ENCODE measurements at regions of chr19 and their contacts with region 1.

Region 1: GRCh38 chr19:49145573-49146407 is 9.4 kb downstream of the HRC start:
- DNase-seq: peak; percentile 82
- H3K4me3 Mint-ChIP-seq: peak overlapping the region; percentile 52
- H3K27ac Mint-ChIP-seq: no peak overlapping the region
- H3K4me1 Mint-ChIP-seq: peaks cover 41% of the 10 kb centered on the region
- H3K27me3 Mint-ChIP-seq: peaks cover 77% of the 10 kb centered on the region

Region 2: DNA sequence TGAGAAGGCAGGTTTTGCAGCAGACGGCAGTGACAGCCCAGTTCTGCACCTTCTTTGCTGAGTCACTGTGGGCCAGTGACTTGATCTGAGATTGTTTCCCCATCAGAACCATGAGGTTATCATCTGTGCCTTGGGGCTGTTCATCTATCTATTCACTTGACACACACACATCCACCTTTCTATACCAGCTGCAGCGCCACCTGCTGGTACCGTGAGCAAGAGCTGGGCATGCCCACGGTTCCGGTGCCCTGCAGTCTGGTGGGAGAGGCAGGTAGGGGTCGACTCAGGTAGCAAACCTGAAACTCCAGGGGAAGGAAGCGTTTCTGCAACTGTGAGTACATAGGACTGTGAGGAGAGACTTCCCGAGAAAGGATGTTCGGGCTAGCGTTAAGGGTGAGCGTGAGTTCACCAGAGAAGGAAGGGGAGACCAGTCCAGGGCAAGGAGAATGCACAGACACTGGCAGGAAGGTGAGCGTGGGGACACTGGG is 39.1 kb before region 1 on chr19:
- CTCF ChIA-PET with region 1: interaction called, 14 read pairs
- DNase-seq: peak; percentile 77
- H3K4me3 Mint-ChIP-seq: peak overlapping the region; percentile 18
- H3K27ac Mint-ChIP-seq: peak overlapping the region; percentile 74
- H3K4me1 Mint-ChIP-seq: peaks cover 6% of the 10 kb centered on the region
- H3K27me3 Mint-ChIP-seq: no peaks in the 10 kb centered on the region

Region 3: DNA sequence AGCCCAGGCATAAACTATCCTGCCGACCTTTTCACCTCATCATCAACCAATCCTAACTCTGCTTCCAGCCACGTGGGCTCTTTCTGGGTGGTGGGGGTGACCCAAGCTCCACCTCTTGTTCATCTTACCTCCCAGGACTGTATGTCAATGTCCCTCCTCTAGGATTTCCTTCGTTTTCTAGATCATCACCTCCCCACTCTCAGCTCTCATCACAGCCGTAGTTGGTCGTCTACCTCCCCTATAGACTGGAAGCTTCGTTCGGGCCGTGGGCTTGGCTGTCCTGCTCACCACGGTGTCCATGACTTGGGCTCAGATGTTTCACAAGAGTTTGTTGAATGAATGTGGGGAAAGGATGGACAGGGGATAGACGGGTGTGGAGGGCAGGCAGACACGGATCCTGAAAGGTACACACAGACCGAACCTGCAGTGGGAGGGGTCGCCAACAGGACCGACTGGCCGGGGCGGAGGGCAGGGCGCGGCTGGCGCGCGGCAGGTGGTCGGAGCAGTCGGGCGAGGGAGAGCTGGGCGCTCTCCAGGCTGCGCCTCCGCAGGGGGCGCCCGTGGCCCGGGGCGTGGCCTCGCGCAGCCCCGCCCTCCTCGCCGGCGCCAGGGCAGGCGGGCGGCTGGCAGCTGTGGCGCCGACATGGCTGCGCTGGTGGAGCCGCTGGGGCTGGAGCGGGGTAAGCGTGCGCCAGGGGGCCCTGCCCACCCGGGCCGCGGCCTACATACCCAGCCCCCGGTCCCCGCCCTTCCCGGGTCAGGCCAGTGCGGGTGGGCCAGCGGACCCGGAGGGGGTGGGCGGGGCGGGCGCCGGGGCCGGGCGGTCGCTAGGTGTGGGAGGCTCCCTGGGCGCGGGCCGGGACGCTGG is 31.8 kb before region 1 on chr19 and contains the start of gene LIN7B:
- CTCF ChIA-PET with region 1: interaction called, 11 read pairs
- DNase-seq: peak; percentile 80
- H3K4me3 Mint-ChIP-seq: peak within 1 kb of the TSS; percentile 79
- H3K27ac Mint-ChIP-seq: peak within 1 kb of the TSS; percentile 49
- H3K4me1 Mint-ChIP-seq: peaks cover 40% of the 10 kb centered on the region
- H3K27me3 Mint-ChIP-seq: no peaks in the 10 kb centered on the region

Region 4: GRCh38 chr19:49127674-49128544 is 17.9 kb before region 1 on chr19:
- CTCF ChIA-PET with region 1: interaction called, 18 read pairs
- DNase-seq: peak; percentile 95
- H3K4me3 Mint-ChIP-seq: peak overlapping the region; percentile 75
- H3K27ac Mint-ChIP-seq: peak overlapping the region; percentile 79
- H3K4me1 Mint-ChIP-seq: peaks cover 16% of the 10 kb centered on the region
- H3K27me3 Mint-ChIP-seq: peaks cover 38% of the 10 kb centered on the region

Region 5: GRCh38 chr19:49200238-49200862 is 54.6 kb after region 1 on chr19:
- CTCF ChIA-PET with region 1: interaction called, 15 read pairs
- DNase-seq: peak; percentile 25
- H3K4me3 Mint-ChIP-seq: no peak overlapping the region
- H3K27ac Mint-ChIP-seq: no peak overlapping the region
- H3K4me1 Mint-ChIP-seq: peaks cover 7% of the 10 kb centered on the region
- H3K27me3 Mint-ChIP-seq: peaks cover 7% of the 10 kb centered on the region

Region 6: GRCh38 chr19:49222011-49222410 is 76.2 kb after region 1 on chr19:
- CTCF ChIA-PET with region 1: no interaction called
- DNase-seq: no peak
- H3K4me3 Mint-ChIP-seq: no peak overlapping the region
- H3K27ac Mint-ChIP-seq: no peak overlapping the region
- H3K4me1 Mint-ChIP-seq: peaks cover 10% of the 10 kb centered on the region
- H3K27me3 Mint-ChIP-seq: peaks cover 20% of the 10 kb centered on the region

Region 7: DNA sequence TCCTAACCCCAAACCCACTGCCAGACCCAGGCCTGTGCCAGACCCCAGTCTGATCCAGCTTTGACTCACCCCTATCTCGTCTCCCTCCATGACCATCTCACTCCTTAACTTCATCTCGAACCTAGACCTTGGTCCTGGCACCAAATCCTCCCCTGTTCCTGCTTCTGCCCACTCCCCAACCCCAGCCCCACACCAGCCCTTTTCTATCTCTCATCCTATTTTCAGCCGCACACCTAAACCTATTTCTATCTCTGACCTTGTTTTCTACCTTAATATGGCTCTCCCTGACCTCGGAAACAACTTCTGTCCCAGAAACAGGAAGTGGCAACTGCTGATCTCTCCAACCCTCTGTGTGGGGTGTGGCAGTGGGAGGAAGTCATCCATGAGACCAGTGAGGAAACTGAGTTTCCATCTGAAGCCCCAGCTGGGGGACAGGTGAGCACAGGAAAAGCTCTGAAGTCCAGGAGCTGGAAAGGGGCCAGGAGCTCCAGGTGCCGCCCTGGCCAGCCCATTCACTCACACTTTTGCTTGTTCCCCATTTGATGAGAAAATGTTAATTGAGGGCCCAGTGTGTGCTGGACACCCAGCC is 263.7 kb after region 1 on chr19:
- CTCF ChIA-PET with region 1: no interaction called
- DNase-seq: peak; percentile 57
- H3K4me3 Mint-ChIP-seq: peak overlapping the region; percentile 50
- H3K27ac Mint-ChIP-seq: peak overlapping the region; percentile 84
- H3K4me1 Mint-ChIP-seq: peaks cover 73% of the 10 kb centered on the region
- H3K27me3 Mint-ChIP-seq: peaks cover 26% of the 10 kb centered on the region